ENCODE measurements at regions of chr10 and their contacts with region 1.

Region 1: DNA sequence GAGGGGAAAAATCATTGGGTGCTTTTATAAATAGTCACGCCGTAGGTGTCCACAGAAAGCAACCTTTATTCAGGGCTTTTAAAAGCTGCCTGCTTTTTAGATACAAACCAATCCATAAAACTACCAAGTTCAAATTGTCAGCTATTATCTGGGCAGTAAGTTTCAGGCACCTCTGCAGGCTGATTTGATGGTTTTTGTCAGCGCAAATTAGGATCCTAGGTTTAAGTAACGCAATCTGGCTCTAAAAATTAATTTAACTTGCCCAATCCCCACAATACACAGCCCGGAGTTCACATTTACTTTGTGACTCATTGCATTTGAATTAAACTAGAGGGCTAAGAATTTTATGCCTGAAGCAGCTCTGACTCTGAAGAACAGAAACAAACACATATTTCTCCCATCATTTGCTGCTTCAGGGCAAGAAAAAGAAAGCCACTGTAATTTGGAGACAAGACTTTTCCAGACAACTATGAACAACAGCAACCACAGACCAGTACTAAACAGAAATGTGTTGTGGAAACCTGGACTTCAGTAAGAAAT is 43.3 kb downstream of the NRP1 start:
- DNase-seq: no peak
- H3K4me3 ChIP-seq: no peak overlapping the region
- H3K4me3 Mint-ChIP-seq: no peak overlapping the region
- H3K27ac Mint-ChIP-seq: peak overlapping the region; percentile 6
- H3K4me1 ChIP-seq: peaks cover 48% of the 10 kb centered on the region
- H3K4me1 Mint-ChIP-seq: peaks cover 35% of the 10 kb centered on the region
- H3K27me3 ChIP-seq: no peaks in the 10 kb centered on the region
- H3K27me3 Mint-ChIP-seq: no peaks in the 10 kb centered on the region
- CTCF ChIP-seq: no peak

Region 2: GRCh38 chr10:33229252-33229948 is 61.7 kb before region 1 on chr10:
- CTCF ChIA-PET with region 1: no interaction called
- POLR2A ChIA-PET with region 1: no interaction called
- intact Hi-C with region 1: no loop called
- DNase-seq: no peak
- H3K4me3 ChIP-seq: no peak overlapping the region
- H3K4me3 Mint-ChIP-seq: no peak overlapping the region
- H3K27ac Mint-ChIP-seq: no peak overlapping the region
- H3K4me1 ChIP-seq: peaks cover 61% of the 10 kb centered on the region
- H3K4me1 Mint-ChIP-seq: peaks cover 54% of the 10 kb centered on the region
- H3K27me3 ChIP-seq: no peaks in the 10 kb centered on the region
- H3K27me3 Mint-ChIP-seq: no peaks in the 10 kb centered on the region
- CTCF ChIP-seq: no peak

Region 3: DNA sequence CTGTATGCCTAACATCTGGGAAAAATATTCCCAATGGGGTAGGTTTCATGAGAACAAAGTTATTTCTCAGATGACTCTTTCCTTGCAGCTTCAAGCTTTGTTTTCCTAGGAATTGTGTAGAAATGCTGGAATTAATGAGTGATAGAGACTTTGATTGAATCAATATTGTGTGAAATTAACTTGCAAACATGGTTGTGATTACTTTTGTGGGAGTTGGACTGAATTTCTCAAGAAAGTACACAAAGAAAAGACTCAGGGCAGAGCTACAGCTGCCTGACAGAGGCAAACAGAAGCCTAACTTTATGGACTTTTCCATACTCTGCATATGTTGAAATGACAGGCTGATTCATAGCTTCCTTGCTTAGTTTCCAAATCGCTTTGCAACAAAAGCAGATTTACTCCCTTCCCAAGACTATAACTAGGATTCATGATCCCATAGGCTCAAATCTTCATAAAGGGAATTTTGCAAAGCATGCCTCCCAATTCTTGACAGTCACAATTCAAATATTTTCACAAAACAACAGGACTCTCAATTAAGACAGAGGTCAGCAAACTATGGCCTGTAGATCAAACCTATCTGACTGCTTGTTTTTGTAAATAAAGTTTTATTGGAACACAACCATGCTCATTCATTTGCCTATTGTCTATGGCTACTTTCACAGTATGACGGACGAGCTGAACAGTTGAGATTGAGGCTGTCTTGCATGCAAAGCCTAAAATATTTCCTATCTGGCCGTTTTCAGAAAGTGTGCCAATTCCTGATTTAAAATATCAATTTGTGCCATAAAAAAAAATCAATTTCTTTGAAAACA is 15.8 kb after region 1 on chr10:
- CTCF ChIA-PET with region 1: no interaction called
- POLR2A ChIA-PET with region 1: no interaction called
- intact Hi-C with region 1: loop called (anchors 1 kb)
- DNase-seq: peak in 1 of 2 experiments; percentile 47
- H3K4me3 ChIP-seq: no peak overlapping the region
- H3K4me3 Mint-ChIP-seq: no peak overlapping the region
- H3K27ac Mint-ChIP-seq: peak overlapping the region; percentile 35
- H3K4me1 ChIP-seq: peaks cover 27% of the 10 kb centered on the region
- H3K4me1 Mint-ChIP-seq: peaks cover 37% of the 10 kb centered on the region
- H3K27me3 ChIP-seq: no peaks in the 10 kb centered on the region
- H3K27me3 Mint-ChIP-seq: no peaks in the 10 kb centered on the region
- CTCF ChIP-seq: no peak